ENCODE measurements at regions of chr3 and their contacts with region 1.

Region 1: DNA sequence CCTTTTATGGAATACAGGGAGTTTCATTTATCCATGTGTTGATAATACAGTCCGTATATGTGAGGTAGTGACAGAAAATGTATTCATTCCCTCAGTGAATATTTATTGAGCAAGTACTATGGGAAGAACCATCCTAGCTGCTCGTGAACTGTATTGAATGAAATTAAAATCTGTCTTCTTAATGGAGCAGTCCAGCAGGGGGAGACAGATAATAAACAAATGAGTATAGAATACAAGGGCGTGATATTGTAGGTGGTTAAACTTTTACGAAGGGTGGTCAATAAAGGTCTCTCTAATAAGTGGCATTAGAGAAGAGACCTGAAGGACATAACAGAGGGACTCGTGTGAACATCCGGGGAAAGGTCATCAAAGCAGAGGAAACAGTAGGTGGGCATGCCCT is 62.7 kb upstream of the OSTN start:
- DNase-seq: no peak
- ATAC-seq: no peak
- H3K4me3 ChIP-seq: no peak overlapping the region
- H3K27ac ChIP-seq: no peak overlapping the region
- H3K4me1 ChIP-seq: no peaks in the 10 kb centered on the region
- H3K27me3 ChIP-seq: no peaks in the 10 kb centered on the region
- CTCF ChIP-seq: peak; percentile 59; the same call in 1 of the 2 replicates

Region 2: GRCh38 chr3:191094057-191094845 is 42.1 kb before region 1 on chr3:
- CTCF ChIA-PET with region 1: no interaction called
- POLR2A ChIA-PET with region 1: no interaction called
- in situ Hi-C with region 1: no loop called
- intact Hi-C with region 1: no loop called
- DNase-seq: peak; percentile 24
- ATAC-seq: no peak
- H3K4me3 ChIP-seq: no peak overlapping the region
- H3K27ac ChIP-seq: no peak overlapping the region
- H3K4me1 ChIP-seq: no peaks in the 10 kb centered on the region
- H3K27me3 ChIP-seq: no peaks in the 10 kb centered on the region
- CTCF ChIP-seq: no peak

Region 3: DNA sequence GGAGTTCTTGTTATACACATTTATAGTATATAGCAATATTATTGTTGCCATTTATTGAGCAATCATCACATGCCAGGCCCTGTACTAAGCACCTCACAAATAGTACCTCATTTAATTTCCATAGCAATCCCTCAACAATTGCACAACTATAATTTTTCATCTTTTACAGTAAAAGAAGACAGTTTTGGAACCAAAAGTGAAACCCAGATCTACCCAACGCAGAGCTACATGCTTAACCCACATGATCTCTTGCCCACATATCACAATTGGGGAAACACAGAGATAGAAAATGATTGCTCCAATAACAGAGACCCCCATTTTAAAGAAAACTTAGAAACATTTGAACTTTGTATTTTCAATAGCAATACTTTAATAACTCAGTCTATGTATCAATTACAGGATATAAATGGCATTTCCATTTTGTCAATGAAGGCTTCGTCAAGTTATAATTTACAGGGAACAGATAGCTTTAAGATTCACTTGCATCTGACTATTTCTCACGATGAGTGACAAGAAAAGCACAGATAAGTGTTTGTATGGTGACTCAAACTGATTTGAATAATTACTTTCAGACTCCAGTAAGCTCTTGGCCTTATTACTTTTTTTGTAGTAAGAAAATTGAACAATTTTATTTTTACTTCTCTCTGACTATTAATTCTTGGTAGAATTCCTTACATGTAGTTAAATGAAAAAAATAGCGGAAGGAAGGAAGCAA is 154.1 kb after region 1 on chr3:
- CTCF ChIA-PET with region 1: no interaction called
- POLR2A ChIA-PET with region 1: no interaction called
- in situ Hi-C with region 1: no loop called
- intact Hi-C with region 1: no loop called
- DNase-seq: no peak
- ATAC-seq: no peak
- H3K4me3 ChIP-seq: no peak overlapping the region
- H3K27ac ChIP-seq: no peak overlapping the region
- H3K4me1 ChIP-seq: no peaks in the 10 kb centered on the region
- H3K27me3 ChIP-seq: no peaks in the 10 kb centered on the region
- CTCF ChIP-seq: no peak

Region 4: DNA sequence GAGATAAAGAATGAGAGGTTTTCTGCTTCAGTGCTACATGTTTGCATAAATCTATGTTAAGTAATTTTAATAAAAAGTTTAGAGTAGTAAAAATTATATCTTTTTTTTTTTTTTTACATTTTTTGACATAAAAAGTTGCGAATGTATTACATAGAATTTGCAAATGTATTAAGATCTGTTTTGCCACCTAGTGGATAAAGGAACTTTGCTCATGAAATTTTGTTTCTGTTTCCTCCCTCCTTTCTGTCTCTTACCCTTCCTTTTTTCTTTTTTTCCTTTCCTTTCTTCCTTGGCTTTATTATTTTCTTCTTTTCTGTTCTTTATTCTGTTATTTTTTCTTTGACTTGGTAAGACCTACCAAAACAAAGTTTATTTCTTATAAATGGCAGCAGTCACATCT is 252.5 kb after region 1 on chr3:
- CTCF ChIA-PET with region 1: no interaction called
- POLR2A ChIA-PET with region 1: no interaction called
- in situ Hi-C with region 1: no loop called
- intact Hi-C with region 1: loop called (anchors 10 kb)
- DNase-seq: no peak
- ATAC-seq: no peak
- H3K4me3 ChIP-seq: no peak overlapping the region
- H3K27ac ChIP-seq: no peak overlapping the region
- H3K4me1 ChIP-seq: no peaks in the 10 kb centered on the region
- H3K27me3 ChIP-seq: no peaks in the 10 kb centered on the region
- CTCF ChIP-seq: peak; percentile 25; the same call in 1 of the 2 replicates